ENCODE measurements at regions of chr12 and their contacts with region 1.

Region 1: DNA sequence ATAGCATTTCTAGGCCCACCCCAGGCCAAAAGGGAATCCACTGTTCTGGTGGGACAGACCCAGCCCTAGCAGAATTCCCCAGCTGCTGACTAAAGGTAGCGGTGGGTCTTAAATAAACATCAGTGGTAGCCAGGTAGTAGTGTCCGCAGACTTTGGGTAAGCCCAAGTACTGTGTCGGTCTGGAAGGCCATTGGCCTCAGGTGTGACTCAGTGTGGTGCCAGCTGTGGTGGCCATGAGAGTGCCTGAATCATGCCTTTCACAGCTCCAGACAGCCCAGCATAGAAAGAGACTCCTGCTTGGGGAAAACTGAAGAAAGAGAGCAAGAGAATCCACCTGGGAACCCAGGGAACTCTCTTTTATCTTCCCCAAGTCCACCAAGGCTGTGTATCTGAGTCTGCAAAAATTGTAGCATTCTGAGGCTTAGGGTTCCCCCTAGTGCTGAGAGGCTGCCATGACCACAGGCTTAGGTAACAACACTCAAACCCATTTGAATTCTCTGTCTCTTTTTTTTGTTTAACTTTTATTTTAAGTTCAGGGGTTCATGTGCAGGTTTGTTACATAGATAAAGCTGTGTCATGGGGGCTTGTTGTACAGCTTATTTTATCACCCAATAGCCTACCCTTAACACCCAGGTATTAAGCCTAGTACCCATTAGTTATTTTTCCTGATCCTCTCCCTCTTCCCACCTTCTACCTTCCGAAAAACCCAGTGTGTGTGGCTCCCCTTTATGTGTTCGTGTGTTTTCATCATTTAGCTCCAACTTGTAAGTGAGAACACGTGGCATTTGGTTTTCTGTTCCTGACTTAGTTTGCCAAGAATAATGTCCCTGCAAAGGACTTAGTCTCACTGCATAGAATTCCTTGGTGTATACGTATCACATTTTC is 16.7 kb upstream of the CD163L1 start:
- DNase-seq: peak; percentile 75
- H3K4me3 Mint-ChIP-seq: no peak overlapping the region
- H3K27ac Mint-ChIP-seq: no peak overlapping the region
- H3K4me1 Mint-ChIP-seq: no peaks in the 10 kb centered on the region
- H3K27me3 Mint-ChIP-seq: peaks cover 5% of the 10 kb centered on the region

Region 2: GRCh38 chr12:7142056-7142644 is 318.5 kb before region 1 on chr12:
- CTCF ChIA-PET with region 1: interaction called, 3 read pairs
- intact Hi-C with region 1: loop called (anchors 2 kb)
- DNase-seq: peak; percentile 74
- H3K4me3 Mint-ChIP-seq: no peak overlapping the region
- H3K27ac Mint-ChIP-seq: no peak overlapping the region
- H3K4me1 Mint-ChIP-seq: peaks cover 2% of the 10 kb centered on the region
- H3K27me3 Mint-ChIP-seq: no peaks in the 10 kb centered on the region

Region 3: GRCh38 chr12:7219599-7220243 is 240.9 kb before region 1 on chr12:
- CTCF ChIA-PET with region 1: interaction called, 22 read pairs
- intact Hi-C with region 1: loop called (anchors 1 kb)
- DNase-seq: peak; percentile 87
- H3K4me3 Mint-ChIP-seq: no peak overlapping the region
- H3K27ac Mint-ChIP-seq: no peak overlapping the region
- H3K4me1 Mint-ChIP-seq: no peaks in the 10 kb centered on the region
- H3K27me3 Mint-ChIP-seq: no peaks in the 10 kb centered on the region

Region 4: DNA sequence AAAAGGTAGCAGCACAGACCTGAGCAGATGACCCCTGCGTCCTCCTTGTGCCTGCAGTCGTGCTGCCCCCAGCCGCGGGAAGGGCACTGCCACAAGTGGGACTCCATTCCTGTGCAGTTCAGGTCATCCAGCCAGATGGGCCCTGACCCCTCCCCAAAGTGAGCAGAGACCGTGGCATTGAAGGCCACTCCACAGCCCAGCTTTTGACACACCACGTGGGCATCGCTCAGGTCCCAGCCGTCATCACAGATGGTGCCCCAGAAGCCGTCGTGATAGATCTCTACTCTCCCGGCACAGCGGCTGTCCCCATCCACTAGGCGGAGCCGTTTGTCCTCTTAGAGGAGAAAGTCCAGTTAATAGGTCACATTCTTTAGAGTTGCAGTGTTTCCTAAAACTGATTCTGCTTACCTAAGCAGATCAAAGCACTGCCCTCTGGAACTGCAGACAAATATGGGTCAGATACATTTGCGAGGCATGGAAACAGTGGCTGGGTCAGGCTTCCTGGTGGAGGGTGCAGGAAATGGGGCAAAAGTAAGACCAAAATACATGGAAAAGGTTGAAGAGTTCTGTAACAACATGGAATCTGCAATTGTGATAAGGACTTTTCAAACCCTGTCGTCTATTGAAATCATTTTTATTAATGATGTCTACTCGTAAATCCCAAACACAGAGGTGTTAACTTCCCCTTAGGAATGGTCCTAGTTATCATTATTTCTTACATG is 86.0 kb before region 1 on chr12:
- CTCF ChIA-PET with region 1: no interaction called
- intact Hi-C with region 1: loop called (anchors 5 kb)
- DNase-seq: peak; percentile 44
- H3K4me3 Mint-ChIP-seq: no peak overlapping the region
- H3K27ac Mint-ChIP-seq: no peak overlapping the region
- H3K4me1 Mint-ChIP-seq: no peaks in the 10 kb centered on the region
- H3K27me3 Mint-ChIP-seq: peaks cover 14% of the 10 kb centered on the region

Region 5: DNA sequence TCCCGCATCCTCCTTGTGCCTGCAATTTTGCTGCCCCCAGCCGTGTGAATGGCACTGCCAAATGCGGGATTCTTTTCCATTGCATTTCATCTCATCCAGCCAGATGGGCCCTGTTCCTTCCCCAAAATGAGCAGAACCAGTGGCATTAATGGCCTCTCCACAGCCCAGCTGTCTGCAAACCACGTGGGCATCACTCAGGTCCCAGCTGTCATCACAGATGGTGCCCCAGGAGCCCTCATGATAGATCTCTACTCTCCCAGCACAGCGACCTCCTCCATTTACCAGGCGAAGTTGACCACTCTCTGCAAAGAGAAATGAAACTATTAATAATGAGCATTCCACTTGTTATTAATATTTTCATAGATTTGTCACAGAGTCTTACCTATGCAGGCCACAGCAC is 25.9 kb after region 1 on chr12:
- CTCF ChIA-PET with region 1: no interaction called
- intact Hi-C with region 1: no loop called
- DNase-seq: no peak
- H3K4me3 Mint-ChIP-seq: no peak overlapping the region
- H3K27ac Mint-ChIP-seq: no peak overlapping the region
- H3K4me1 Mint-ChIP-seq: no peaks in the 10 kb centered on the region
- H3K27me3 Mint-ChIP-seq: no peaks in the 10 kb centered on the region

Region 6: DNA sequence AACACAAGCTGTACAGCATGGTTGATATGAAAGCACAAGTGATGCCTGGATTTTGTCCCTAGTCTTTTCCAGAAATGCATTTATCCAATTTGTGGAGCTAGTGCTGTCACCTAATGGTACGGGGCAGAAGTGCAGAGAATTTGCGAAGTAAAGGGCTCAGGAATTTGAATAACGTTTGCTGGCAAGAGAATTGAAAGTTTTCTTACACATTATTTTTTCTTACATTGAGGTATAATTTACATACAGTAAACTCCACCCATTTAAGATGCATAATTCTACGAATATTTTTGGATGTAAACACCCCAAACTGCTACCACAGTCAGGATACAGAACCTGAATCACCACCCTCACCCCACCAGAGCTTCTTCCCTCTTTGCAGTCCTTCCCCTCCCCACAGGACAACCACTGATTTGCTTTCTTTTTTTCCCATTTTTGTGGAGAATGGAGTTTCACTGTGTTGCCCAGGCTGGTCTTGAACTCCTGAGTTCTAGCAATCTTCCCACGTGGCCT is 1148.5 kb after region 1 on chr12:
- CTCF ChIA-PET with region 1: no interaction called
- intact Hi-C with region 1: no loop called
- DNase-seq: peak; percentile 38
- H3K4me3 Mint-ChIP-seq: no peak overlapping the region
- H3K27ac Mint-ChIP-seq: no peak overlapping the region
- H3K4me1 Mint-ChIP-seq: peaks cover 10% of the 10 kb centered on the region
- H3K27me3 Mint-ChIP-seq: peaks cover 3% of the 10 kb centered on the region